CD8-positive, alpha-beta T cell (primary cell): ENCODE measurements at regions of chr2 and their contacts with region 1.

Region 1: DNA sequence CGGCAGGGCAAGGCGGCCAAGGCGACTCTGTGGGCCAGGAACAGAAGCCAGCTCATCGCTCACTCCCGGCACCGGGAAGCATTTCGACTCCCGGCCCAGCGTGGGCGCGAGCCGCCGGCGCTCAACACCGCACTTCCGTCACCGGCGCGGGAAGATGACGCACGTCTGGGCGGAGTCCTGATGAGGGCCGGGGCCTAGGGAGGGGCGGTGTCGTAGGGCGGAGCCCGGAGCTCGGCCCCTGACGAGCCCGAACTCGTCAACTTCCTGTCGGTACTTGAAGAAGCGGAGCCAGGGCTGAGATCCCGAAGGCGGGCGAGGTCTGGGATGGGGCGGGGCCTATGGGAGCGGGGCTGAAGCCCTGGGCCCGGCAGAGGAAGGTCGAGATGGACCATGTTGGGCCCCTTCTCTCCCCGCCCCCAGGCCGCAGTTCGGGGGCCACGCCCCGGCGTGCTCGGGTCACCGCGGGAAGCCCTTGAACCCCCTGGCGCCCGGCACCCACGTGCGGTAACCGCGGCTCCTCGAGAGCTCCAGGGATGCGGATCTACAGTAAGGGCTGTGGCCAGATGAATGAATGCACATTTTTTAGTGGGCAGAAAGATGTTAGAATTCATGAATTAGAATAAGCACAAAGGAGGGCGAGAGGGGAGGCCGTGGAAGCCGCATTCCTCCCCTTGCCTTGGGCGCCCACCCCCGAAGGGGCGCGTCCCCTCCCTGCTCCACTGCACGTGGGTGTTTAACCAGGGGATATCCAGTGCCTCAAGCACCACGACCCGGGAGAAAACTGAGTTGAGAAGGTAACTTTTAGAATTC is at the start of gene RNASEH1:
- DNase-seq: peak; percentile 96 to 99 (median 99)
- ATAC-seq: peak; percentile 96
- H3K4me3 ChIP-seq: peak within 1 kb of the TSS; percentile 94 to 96
- H3K4me3 Mint-ChIP-seq: peak within 1 kb of the TSS; percentile 91
- H3K27ac ChIP-seq: peak within 1 kb of the TSS; percentile 94
- H3K27ac Mint-ChIP-seq: peak within 1 kb of the TSS; percentile 96
- H3K4me1 ChIP-seq: peaks cover 20% of the 10 kb centered on the region
- H3K4me1 Mint-ChIP-seq: peaks cover 29% of the 10 kb centered on the region
- H3K27me3 ChIP-seq: no peaks in the 10 kb centered on the region
- H3K27me3 Mint-ChIP-seq: no peaks in the 10 kb centered on the region
- CTCF ChIP-seq: no peak
- total RNA-seq, gene RNASEH1: 31.1 to 34.1 TPM

Region 2: DNA sequence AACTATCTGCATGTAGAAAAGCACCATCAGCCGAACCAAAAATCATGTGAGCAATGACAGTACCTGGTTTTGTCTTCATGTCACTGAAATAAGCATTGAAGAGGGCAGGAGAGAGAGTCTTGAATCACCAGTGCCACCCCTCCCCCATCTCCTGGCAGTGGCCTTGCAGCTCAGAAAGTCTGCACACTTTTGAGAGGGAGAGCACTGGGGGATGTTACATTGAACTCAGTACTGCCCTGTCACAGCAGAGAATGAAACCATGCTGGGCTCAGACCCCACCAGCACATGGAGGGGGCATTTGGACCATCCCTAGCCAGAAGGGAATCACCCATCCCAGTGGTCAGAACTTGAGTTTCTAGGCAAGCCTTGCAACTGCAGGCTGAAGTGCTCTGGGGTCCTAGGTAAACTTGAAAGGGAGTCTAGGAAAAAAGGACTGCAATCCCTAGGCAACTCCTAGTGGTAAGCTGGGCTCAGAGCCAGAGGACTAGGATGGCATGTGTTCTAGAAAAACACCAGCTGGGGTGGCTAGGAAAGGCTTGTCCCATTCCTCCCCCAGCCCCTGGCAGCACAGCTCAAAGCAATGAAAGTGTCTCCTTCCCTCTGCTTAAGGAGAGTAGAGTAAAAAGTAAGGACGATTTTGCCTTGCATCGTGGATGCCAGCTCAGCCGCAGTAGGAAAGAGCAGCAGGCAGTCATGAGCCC is 967.4 kb before region 1 on chr2:
- CTCF ChIA-PET with region 1: no interaction called
- POLR2A ChIA-PET with region 1: no interaction called
- intact Hi-C with region 1: no loop called
- DNase-seq: no peak
- ATAC-seq: no peak
- H3K4me3 ChIP-seq: no peak overlapping the region
- H3K4me3 Mint-ChIP-seq: no peak overlapping the region
- H3K27ac ChIP-seq: no peak overlapping the region
- H3K27ac Mint-ChIP-seq: no peak overlapping the region
- H3K4me1 ChIP-seq: no peaks in the 10 kb centered on the region
- H3K4me1 Mint-ChIP-seq: no peaks in the 10 kb centered on the region
- H3K27me3 ChIP-seq: no peaks in the 10 kb centered on the region
- H3K27me3 Mint-ChIP-seq: peaks cover 2% of the 10 kb centered on the region
- CTCF ChIP-seq: no peak

Region 3: GRCh38 chr2:3379647-3380534 is 178.5 kb before region 1 on chr2 and contains the start of gene TRAPPC12:
- CTCF ChIA-PET with region 1: interaction called, 3 read pairs
- POLR2A ChIA-PET with region 1: interaction called, 22 read pairs
- intact Hi-C with region 1: loop called (anchors 1 kb)
- DNase-seq: peak; percentile 86 to 95 (median 92)
- ATAC-seq: peak; percentile 79
- H3K4me3 ChIP-seq: peak within 1 kb of the TSS; percentile 82 to 88
- H3K4me3 Mint-ChIP-seq: peak within 1 kb of the TSS; percentile 97
- H3K27ac ChIP-seq: peak within 1 kb of the TSS; percentile 95
- H3K27ac Mint-ChIP-seq: peak within 1 kb of the TSS; percentile 99
- H3K4me1 ChIP-seq: peaks cover 29% of the 10 kb centered on the region
- H3K4me1 Mint-ChIP-seq: peaks cover 67% of the 10 kb centered on the region
- H3K27me3 ChIP-seq: no peaks in the 10 kb centered on the region
- H3K27me3 Mint-ChIP-seq: no peaks in the 10 kb centered on the region
- CTCF ChIP-seq: peak; percentile 24
- total RNA-seq, gene TRAPPC12: 33.3 to 35.1 TPM

Region 4: DNA sequence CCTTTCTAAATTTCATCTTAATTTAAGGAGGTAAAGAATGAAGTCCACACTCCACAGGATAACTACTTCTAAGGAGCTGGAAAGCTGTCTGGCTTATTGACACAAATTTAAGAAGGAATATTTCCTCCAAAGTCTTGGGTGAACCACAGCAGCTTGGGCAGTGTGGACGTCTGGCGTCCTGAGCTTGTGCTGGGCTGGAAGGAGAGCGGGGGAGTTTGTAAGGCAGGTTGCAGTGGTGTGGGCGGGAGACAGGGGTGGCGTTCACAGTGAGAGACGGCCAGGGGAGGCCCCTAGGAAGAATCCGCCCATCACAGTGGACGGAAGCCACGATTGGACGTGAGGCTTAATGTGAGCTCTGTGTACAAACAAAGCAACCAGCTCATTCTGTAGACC is 64.8 kb before region 1 on chr2:
- CTCF ChIA-PET with region 1: no interaction called
- POLR2A ChIA-PET with region 1: no interaction called
- intact Hi-C with region 1: no loop called
- DNase-seq: no peak
- ATAC-seq: no peak
- H3K4me3 ChIP-seq: no peak overlapping the region
- H3K4me3 Mint-ChIP-seq: no peak overlapping the region
- H3K27ac ChIP-seq: no peak overlapping the region
- H3K27ac Mint-ChIP-seq: no peak overlapping the region
- H3K4me1 ChIP-seq: no peaks in the 10 kb centered on the region
- H3K4me1 Mint-ChIP-seq: no peaks in the 10 kb centered on the region
- H3K27me3 ChIP-seq: no peaks in the 10 kb centered on the region
- H3K27me3 Mint-ChIP-seq: no peaks in the 10 kb centered on the region
- CTCF ChIP-seq: no peak

Region 5: GRCh38 chr2:3532941-3533340 is 25.5 kb before region 1 on chr2:
- CTCF ChIA-PET with region 1: no interaction called
- POLR2A ChIA-PET with region 1: no interaction called
- intact Hi-C with region 1: no loop called
- DNase-seq: no peak
- ATAC-seq: no peak
- H3K4me3 ChIP-seq: no peak overlapping the region
- H3K4me3 Mint-ChIP-seq: no peak overlapping the region
- H3K27ac ChIP-seq: no peak overlapping the region
- H3K27ac Mint-ChIP-seq: no peak overlapping the region
- H3K4me1 ChIP-seq: no peaks in the 10 kb centered on the region
- H3K4me1 Mint-ChIP-seq: peaks cover 5% of the 10 kb centered on the region
- H3K27me3 ChIP-seq: no peaks in the 10 kb centered on the region
- H3K27me3 Mint-ChIP-seq: no peaks in the 10 kb centered on the region
- CTCF ChIP-seq: no peak

Region 6: GRCh38 chr2:3585261-3586109 is 27.1 kb after region 1 on chr2:
- CTCF ChIA-PET with region 1: no interaction called
- POLR2A ChIA-PET with region 1: no interaction called
- intact Hi-C with region 1: no loop called
- DNase-seq: no peak
- ATAC-seq: no peak
- H3K4me3 ChIP-seq: no peak overlapping the region
- H3K4me3 Mint-ChIP-seq: no peak overlapping the region
- H3K27ac ChIP-seq: no peak overlapping the region
- H3K27ac Mint-ChIP-seq: no peak overlapping the region
- H3K4me1 ChIP-seq: no peaks in the 10 kb centered on the region
- H3K4me1 Mint-ChIP-seq: peaks cover 1% of the 10 kb centered on the region
- H3K27me3 ChIP-seq: no peaks in the 10 kb centered on the region
- H3K27me3 Mint-ChIP-seq: no peaks in the 10 kb centered on the region
- CTCF ChIP-seq: no peak

Region 7: GRCh38 chr2:3651691-3652648 is 93.6 kb after region 1 on chr2:
- CTCF ChIA-PET with region 1: no interaction called
- POLR2A ChIA-PET with region 1: interaction called, 4 read pairs
- intact Hi-C with region 1: loop called (anchors 1 to 5 kb)
- DNase-seq: peak; percentile 45 to 80 (median 69)
- ATAC-seq: peak; percentile 61
- H3K4me3 ChIP-seq: peak overlapping the region; percentile 47 to 58
- H3K4me3 Mint-ChIP-seq: peak overlapping the region; percentile 86
- H3K27ac ChIP-seq: peak overlapping the region in 1 of 2 experiments; percentile 68
- H3K27ac Mint-ChIP-seq: peak overlapping the region; percentile 64
- H3K4me1 ChIP-seq: no peaks in the 10 kb centered on the region
- H3K4me1 Mint-ChIP-seq: peaks cover 6% of the 10 kb centered on the region
- H3K27me3 ChIP-seq: no peaks in the 10 kb centered on the region
- H3K27me3 Mint-ChIP-seq: peaks cover 5% of the 10 kb centered on the region
- CTCF ChIP-seq: no peak